ENCODE measurements at regions of chr3 and their contacts with region 1.

Region 1: GRCh38 chr3:152241142-152242017 is 27.3 kb upstream of the MBNL1 start:
- DNase-seq: no peak
- H3K4me3 Mint-ChIP-seq: peak overlapping the region; percentile 84
- H3K27ac Mint-ChIP-seq: peak overlapping the region; percentile 88
- H3K4me1 Mint-ChIP-seq: peaks cover 59% of the 10 kb centered on the region
- H3K27me3 Mint-ChIP-seq: no peaks in the 10 kb centered on the region

Region 2: DNA sequence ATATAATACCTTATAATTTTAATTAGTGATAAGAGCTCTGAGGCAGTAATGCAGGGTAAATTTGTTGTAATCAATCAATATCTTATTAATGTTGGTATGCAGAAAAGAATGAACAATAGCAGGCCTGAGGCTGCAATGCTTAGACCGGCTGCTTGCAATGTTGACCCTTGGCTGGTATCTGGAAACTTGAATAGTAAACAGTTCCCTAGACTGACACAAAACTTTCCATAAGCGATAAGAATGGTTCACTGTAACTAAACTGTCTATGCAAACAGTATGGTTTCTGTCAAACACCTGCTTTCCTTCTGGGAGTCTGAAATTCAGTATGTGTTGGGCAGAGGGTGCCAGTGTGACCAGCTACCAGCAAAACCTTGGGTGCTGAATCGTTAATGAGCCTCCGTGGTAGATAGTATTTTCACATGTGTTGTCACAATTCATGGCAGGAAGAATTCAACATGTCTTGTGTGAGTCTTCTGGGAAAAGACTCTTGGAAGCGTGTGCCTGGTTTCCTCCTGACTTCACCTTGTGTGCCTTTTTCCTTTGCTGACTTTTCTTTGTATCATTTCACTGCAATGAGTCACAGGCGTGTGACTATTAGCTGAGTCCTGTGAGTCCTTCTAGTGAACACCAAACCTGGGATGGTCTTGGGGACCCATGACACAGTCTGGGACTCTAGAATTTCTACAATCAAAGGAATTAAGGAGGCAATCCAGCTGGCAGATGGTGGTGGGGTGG is 1238.2 kb before region 1 on chr3:
- CTCF ChIA-PET with region 1: no interaction called
- POLR2A ChIA-PET with region 1: no interaction called
- intact Hi-C with region 1: no loop called
- DNase-seq: no peak
- H3K4me3 Mint-ChIP-seq: no peak overlapping the region
- H3K27ac Mint-ChIP-seq: no peak overlapping the region
- H3K4me1 Mint-ChIP-seq: no peaks in the 10 kb centered on the region
- H3K27me3 Mint-ChIP-seq: peaks cover 3% of the 10 kb centered on the region

Region 3: DNA sequence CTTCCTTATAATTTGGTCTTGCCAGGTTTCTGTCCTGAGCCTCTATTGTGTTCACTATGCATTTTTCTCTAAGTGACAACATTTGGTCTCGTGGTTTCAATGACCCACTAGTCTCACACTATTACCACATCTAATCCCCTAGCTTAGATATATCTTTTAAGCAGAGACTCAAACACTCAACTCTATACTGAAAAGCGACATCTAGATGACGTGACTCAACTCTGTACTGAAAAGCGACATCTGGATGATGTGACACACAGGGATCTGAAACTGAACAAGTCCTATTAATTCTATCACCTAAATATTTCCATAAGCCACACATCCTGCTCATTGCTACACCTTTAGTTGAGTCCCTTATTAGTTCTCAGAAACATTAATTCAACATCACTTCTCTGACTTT is 114.3 kb before region 1 on chr3:
- CTCF ChIA-PET with region 1: no interaction called
- POLR2A ChIA-PET with region 1: no interaction called
- intact Hi-C with region 1: loop called (anchors 2 kb)
- DNase-seq: peak; percentile 29
- H3K4me3 Mint-ChIP-seq: no peak overlapping the region
- H3K27ac Mint-ChIP-seq: no peak overlapping the region
- H3K4me1 Mint-ChIP-seq: peaks cover 20% of the 10 kb centered on the region
- H3K27me3 Mint-ChIP-seq: no peaks in the 10 kb centered on the region

Region 4: DNA sequence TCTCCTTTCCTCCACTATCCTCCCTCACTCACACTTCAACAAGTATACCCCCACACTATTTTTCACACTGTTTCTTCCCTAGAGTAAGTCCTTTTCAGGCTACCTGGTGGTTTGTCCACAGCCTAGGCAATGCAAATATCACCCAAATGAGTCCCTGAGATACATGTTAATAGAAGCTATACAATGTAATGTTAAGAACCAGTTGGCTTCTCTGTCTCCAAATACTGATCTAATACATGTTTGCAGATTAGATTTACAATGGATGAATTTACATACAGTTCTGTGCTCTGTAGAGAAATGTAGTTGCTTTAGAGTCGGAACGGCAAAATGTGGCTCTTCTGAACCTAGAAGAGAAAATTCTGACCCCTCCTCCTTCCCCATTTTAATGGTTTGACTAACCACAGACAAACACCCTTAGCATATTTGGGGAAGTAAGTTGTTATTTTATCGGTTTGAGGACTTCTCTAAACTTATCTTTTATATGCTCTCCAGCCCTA is 36.2 kb before region 1 on chr3:
- CTCF ChIA-PET with region 1: interaction called, 6 read pairs
- POLR2A ChIA-PET with region 1: interaction called, 57 read pairs
- intact Hi-C with region 1: loop called (anchors 1 kb)
- DNase-seq: no peak
- H3K4me3 Mint-ChIP-seq: peak overlapping the region; percentile 79
- H3K27ac Mint-ChIP-seq: peak overlapping the region; percentile 89
- H3K4me1 Mint-ChIP-seq: peaks cover 58% of the 10 kb centered on the region
- H3K27me3 Mint-ChIP-seq: no peaks in the 10 kb centered on the region

Region 5: DNA sequence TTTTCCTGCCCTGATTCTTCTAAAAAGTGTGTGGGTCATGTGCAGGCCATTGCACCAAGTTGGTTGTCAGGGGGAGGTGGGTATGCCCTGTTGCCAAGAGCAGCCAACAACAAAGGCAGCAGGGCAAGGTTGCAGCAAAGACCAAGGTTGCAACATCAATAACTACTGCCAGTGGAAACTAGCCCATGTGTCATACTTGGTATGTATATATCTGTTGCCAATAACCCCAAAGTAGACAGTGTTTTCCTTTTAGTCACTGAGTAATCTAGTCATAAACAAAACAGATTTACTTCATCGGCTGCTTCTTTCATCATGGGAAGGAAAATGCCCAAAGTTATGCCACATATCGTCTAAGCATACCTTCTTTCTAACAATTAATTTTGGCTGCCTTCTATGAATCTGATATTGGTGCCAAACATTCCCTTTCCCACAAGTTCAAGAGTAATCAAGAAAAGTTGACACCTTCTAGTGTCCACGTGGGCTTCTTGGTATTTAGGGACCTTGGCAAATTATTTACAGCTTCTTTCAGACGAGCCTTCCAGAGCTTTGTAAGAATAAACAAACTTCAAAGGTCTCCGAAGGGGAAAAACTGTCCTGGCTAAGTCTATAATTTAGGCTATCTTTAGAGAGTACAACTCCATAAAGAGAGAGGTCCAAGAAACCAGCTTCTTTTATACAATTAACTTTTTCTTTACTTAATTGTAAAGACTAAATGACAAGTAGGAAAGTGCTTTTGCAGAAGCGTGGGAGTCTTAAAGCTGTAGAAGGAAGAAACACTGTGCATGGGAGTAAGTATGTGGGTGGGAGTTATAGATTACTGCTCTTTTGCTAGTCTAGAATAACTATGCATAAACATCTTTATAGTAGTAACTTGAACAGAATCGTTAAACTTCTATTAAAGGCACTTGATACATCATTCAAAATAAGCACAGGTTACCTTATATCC is 17.3 kb after region 1 on chr3:
- CTCF ChIA-PET with region 1: interaction called, 9 read pairs
- POLR2A ChIA-PET with region 1: interaction called, 47 read pairs
- intact Hi-C with region 1: loop called (anchors 1 kb)
- DNase-seq: peak; percentile 86
- H3K4me3 Mint-ChIP-seq: peak overlapping the region; percentile 70
- H3K27ac Mint-ChIP-seq: peak overlapping the region; percentile 95
- H3K4me1 Mint-ChIP-seq: peaks cover 83% of the 10 kb centered on the region
- H3K27me3 Mint-ChIP-seq: no peaks in the 10 kb centered on the region

Region 6: DNA sequence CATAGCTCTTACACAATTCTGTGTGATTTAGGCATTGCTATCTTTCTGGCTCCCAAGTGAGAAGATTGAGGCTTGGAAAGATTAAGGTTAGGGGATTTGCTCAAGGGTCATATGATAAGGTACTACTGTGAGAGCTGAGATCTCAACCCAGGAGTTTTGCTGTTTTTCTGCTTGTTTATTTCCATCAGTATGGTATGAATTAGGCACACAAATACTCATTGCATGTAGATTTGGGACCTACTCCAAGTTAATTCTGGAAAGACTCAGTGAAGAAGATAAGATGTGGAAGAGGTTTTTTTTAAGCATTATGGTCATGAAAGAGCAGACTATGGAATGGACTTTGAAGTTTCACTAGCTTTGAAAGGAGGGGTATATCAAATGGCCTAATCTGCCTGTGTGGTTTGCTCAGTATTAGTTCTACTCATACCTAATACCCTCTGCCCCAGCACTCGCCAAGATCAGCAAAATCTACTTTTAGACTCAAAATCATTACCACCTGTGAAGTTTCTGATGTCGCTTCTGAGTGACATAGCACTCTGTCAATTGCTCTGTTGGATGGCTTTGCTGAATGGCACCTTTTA is 39.8 kb after region 1 on chr3:
- CTCF ChIA-PET with region 1: no interaction called
- POLR2A ChIA-PET with region 1: interaction called, 35 read pairs
- intact Hi-C with region 1: no loop called
- DNase-seq: no peak
- H3K4me3 Mint-ChIP-seq: peak overlapping the region; percentile 50
- H3K27ac Mint-ChIP-seq: peak overlapping the region; percentile 70
- H3K4me1 Mint-ChIP-seq: peaks cover 75% of the 10 kb centered on the region
- H3K27me3 Mint-ChIP-seq: no peaks in the 10 kb centered on the region

Region 7: GRCh38 chr3:153043729-153044328 is 802.4 kb after region 1 on chr3:
- CTCF ChIA-PET with region 1: no interaction called
- POLR2A ChIA-PET with region 1: no interaction called
- intact Hi-C with region 1: no loop called
- DNase-seq: no peak
- H3K4me3 Mint-ChIP-seq: no peak overlapping the region
- H3K27ac Mint-ChIP-seq: no peak overlapping the region
- H3K4me1 Mint-ChIP-seq: peaks cover 7% of the 10 kb centered on the region
- H3K27me3 Mint-ChIP-seq: no peaks in the 10 kb centered on the region

Measured in activated CD4-positive, alpha-beta memory T cell treated with anti-CD3 and anti-CD28 coated beads for 36 hours (primary cell).